MCF 10A (cell line): ENCODE measurements at regions of chr2 and their contacts with region 1.

Region 1: GRCh38 chr2:164841719-164842623 is at the start of gene COBLL1:
- DNase-seq: peak; percentile 85
- H3K4me3 Mint-ChIP-seq: peak within 1 kb of the TSS; percentile 98
- H3K27ac Mint-ChIP-seq: peak within 1 kb of the TSS; percentile 50
- H3K4me1 Mint-ChIP-seq: peaks cover 7% of the 10 kb centered on the region
- H3K27me3 Mint-ChIP-seq: no peaks in the 10 kb centered on the region
- CTCF ChIP-seq: peak; percentile 83
- total RNA-seq, gene COBLL1: 37.1 and 47.0 TPM in 2 replicates

Region 2: DNA sequence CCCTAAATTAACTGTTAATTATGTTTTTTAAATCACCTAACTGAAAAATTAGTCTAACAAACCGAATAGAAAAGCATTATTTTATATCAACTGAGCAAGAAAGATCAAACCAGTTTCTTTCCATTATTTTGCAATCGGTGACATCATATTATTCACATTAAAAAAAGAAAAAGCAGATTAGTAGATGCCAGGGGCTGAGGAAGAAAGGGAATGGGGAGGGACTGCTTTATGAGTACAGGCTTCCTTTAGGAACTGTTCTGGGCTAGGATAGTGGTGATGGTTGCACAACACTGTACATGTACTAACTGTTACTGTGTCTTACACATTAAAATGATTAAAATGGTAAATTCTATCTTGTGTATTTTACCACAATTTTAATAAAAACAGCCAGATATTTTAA is 59.6 kb before region 1 on chr2:
- CTCF ChIA-PET with region 1: interaction called, 19 read pairs
- POLR2A ChIA-PET with region 1: interaction called, 17 read pairs
- intact Hi-C with region 1: loop called (anchors 5 kb)
- DNase-seq: peak; percentile 82
- H3K4me3 Mint-ChIP-seq: no peak overlapping the region
- H3K27ac Mint-ChIP-seq: peak overlapping the region; percentile 73
- H3K4me1 Mint-ChIP-seq: peaks cover 36% of the 10 kb centered on the region
- H3K27me3 Mint-ChIP-seq: no peaks in the 10 kb centered on the region
- CTCF ChIP-seq: no peak

Region 3: DNA sequence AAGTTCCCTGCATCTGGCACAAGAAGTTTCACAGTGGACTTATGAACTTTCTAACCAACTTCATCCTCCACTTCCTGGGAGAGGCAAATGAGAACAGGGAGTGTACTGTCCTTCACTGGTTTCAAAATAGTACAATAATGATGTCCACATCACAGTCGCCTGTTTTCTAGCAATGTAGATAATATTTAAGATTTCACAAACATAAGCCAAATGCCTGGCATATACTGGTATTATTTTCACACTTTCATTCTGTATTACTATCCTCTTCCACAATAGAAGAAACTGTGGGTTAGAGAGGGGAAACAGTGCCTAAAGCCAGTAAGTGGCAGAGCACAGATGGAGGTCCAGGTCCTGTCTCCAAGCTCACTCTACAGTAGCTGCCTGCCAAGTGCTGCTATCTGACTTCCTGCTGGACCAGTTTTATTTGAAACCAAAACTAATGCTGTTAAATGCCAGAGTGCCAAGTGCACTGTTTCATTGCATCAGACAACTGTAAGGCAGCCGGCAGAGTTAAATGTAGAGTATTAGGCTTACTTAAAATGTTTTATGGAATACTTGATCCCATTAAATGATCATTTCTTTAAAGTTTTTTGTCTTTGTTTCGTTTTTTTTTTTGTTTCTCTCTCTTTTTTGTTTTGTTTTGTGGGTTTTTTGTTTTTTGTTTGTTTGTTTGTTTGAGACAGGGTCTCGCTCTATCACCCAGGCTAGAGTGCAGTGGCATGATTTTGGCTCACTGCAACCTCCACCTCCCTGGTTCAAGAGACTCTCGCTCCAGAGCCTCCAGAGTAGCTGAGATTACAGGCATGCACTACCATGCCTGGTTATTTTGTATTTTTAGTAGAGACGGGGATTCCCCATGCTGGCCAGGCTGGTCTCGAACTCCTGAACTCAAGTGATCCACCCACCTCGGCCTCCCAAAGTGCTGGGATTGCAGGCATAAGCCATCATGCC is 15.4 kb before region 1 on chr2:
- CTCF ChIA-PET with region 1: interaction called, 17 read pairs
- POLR2A ChIA-PET with region 1: interaction called, 26 read pairs
- intact Hi-C with region 1: no loop called
- DNase-seq: peak; percentile 64
- H3K4me3 Mint-ChIP-seq: peak overlapping the region; percentile 22
- H3K27ac Mint-ChIP-seq: peak overlapping the region; percentile 90
- H3K4me1 Mint-ChIP-seq: peaks cover 14% of the 10 kb centered on the region
- H3K27me3 Mint-ChIP-seq: no peaks in the 10 kb centered on the region
- CTCF ChIP-seq: no peak

Region 4: DNA sequence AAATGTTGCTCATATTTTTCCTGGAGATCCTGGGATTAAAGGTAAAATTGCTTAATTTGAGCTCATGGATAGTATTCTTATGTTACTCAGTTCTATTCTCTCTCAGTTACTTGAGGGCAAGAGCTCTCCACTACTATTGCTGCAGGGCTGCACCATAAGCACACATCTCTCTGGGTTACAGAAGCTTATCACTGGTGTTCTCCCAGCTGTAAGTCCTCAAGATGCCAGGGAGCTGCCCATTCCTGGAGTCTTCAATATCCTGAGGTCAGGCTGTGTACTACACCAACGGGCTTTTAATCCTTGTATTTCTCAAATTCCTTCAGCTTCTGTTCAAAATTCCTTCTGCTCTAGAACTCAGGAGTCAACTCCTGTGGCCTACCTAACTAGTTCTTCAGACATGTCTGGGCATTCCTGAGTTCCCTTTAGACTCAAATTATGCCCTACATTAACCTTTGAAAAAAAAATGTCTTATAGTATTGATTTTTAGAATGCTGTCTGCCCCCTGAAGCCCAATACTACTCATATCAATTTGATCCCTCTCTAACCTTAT is 17.4 kb after region 1 on chr2:
- CTCF ChIA-PET with region 1: interaction called, 10 read pairs
- POLR2A ChIA-PET with region 1: interaction called, 11 read pairs
- intact Hi-C with region 1: no loop called
- DNase-seq: no peak
- H3K4me3 Mint-ChIP-seq: no peak overlapping the region
- H3K27ac Mint-ChIP-seq: peak overlapping the region; percentile 54
- H3K4me1 Mint-ChIP-seq: peaks cover 4% of the 10 kb centered on the region
- H3K27me3 Mint-ChIP-seq: no peaks in the 10 kb centered on the region
- CTCF ChIP-seq: no peak

Region 5: DNA sequence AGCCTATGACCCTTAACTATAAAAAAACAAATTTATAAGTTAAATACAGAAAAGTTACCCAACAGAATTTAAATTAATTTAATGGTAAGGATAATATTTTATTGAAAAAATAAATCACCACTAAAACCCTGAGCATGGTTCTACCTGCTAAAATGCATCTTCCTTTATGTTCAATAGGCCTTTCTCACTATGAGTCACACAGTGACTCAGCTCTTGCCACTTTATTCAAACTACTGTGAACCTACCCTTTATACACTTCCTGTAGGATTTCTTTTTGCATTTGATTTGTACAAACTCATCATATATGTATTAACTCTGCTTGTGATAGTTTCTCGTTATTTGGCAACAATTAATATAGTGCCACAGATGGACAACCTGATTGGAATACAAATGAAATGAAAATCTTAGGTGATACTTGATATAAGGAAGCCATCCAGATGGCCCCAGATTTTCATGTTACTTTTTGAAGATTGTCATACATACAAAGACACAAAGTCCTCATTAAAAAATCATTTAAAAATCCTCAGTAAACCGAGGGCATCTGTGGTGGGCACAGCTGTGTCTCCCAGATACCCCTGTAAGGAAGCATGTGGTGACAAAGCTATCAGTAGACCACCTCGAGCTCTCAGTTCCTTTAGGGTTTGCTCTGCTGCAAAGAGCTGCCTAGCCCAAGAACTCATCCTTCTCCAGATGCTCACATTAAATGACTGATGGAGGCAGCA is 54.8 kb after region 1 on chr2:
- CTCF ChIA-PET with region 1: interaction called, 30 read pairs
- POLR2A ChIA-PET with region 1: interaction called, 12 read pairs
- intact Hi-C with region 1: no loop called
- DNase-seq: peak; percentile 75
- H3K4me3 Mint-ChIP-seq: no peak overlapping the region
- H3K27ac Mint-ChIP-seq: peak overlapping the region; percentile 85
- H3K4me1 Mint-ChIP-seq: peaks cover 15% of the 10 kb centered on the region
- H3K27me3 Mint-ChIP-seq: no peaks in the 10 kb centered on the region
- CTCF ChIP-seq: no peak

Region 6: DNA sequence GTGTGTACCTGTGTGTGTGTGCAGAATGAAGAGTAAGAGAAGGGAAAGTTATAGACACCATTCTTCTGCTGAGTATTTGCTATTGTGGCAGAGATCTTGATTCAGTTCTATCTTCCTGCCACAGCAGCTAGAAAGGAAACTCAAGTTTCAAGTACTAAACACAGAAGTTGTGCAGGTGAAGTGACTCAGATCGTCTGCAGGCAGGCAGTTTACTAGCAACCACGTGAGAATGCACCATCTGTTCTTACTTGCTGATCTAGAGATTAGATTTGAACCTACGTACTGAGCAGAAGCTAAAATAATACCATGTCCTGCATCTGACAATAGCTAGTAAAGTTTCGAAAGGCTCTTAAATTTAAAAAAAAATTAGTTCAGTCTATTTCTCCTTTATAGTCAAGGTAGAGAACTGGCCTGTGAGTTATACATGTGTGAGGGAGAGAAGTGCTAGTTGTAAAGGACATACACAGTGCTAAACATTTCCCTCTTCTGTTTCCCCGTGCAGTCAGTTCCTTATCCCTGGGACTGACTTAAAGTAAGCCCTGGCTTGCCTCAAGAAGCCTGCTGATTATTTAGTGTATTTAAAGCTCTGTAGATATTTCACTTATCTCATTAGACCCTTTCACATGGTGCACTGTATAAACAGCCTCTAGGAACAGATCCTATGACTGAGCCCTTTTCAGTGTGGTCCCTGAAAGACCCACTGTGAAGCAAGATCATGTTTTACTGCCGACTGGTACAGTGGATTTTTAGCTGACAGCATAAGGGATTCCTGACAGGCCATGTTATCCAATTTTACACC is 68.3 kb after region 1 on chr2:
- CTCF ChIA-PET with region 1: interaction called, 47 read pairs
- POLR2A ChIA-PET with region 1: interaction called, 65 read pairs
- intact Hi-C with region 1: loop called (anchors 1 kb)
- DNase-seq: peak; percentile 61
- H3K4me3 Mint-ChIP-seq: peak overlapping the region; percentile 11
- H3K27ac Mint-ChIP-seq: peak overlapping the region; percentile 84
- H3K4me1 Mint-ChIP-seq: peaks cover 16% of the 10 kb centered on the region
- H3K27me3 Mint-ChIP-seq: no peaks in the 10 kb centered on the region
- CTCF ChIP-seq: no peak

Region 7: DNA sequence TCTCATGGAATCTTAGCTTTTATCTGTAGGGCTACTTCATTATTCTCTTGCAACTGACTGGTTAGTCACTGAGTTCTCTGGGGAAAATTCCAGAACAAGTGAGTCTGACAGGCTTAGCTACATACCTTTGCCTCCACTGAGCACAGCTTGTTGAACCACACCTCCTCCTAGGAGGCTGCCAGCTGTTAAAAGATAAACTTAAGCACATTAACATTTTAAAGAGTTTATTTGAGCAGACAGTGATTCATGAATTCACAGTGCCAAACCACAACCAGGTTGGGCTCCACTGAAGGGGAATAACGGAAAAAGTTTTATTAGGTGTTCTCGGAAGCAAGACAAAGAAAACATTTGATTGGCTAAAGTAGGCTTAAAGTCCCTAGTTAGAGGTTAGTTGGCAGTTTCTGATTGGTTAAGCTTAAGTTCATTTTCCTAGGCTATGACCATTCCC is 125.8 kb after region 1 on chr2:
- CTCF ChIA-PET with region 1: interaction called, 3 read pairs
- POLR2A ChIA-PET with region 1: no interaction called
- intact Hi-C with region 1: loop called (anchors 5 kb)
- DNase-seq: peak; percentile 77
- H3K4me3 Mint-ChIP-seq: no peak overlapping the region
- H3K27ac Mint-ChIP-seq: peak overlapping the region; percentile 65
- H3K4me1 Mint-ChIP-seq: peaks cover 14% of the 10 kb centered on the region
- H3K27me3 Mint-ChIP-seq: no peaks in the 10 kb centered on the region
- CTCF ChIP-seq: no peak